Activated naive CD4-positive, alpha-beta T cell treated with anti-CD3 and anti-CD28 coated beads, Interleukin-2, amount 10 ng/mL, durations not matched to agents 7 days and 5 days (primary cell): ENCODE measurements at regions of chr19 and their contacts with region 1.

Region 1: GRCh38 chr19:35013031-35013819 is 13.1 kb downstream of the GRAMD1A start:
- DNase-seq: peak; percentile 84
- H3K4me3 Mint-ChIP-seq: peak overlapping the region; percentile 25
- H3K27ac Mint-ChIP-seq: peak overlapping the region; percentile 92
- H3K4me1 Mint-ChIP-seq: peaks cover 65% of the 10 kb centered on the region
- H3K27me3 Mint-ChIP-seq: no peaks in the 10 kb centered on the region

Region 2: DNA sequence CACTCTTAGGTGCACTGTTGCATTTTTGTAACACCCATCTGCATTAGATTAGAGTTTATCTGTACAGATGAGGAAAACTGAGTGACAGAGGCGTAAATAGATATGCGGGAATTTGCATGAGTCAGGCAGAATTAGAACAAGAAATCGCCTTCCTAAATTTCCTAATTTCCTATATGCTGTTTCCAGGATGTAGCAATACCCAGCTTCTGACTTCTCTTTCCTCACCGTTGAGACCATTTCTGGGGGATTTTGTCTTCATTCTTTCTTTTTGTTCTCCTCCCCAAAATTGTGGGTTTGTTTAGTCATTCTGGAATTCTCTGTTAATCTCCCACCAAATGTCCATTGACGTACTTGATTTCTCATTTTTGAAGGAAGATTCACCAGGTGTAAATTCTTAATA is 38.6 kb before region 1 on chr19:
- CTCF ChIA-PET with region 1: interaction called, 65 read pairs
- DNase-seq: no peak
- H3K4me3 Mint-ChIP-seq: no peak overlapping the region
- H3K27ac Mint-ChIP-seq: no peak overlapping the region
- H3K4me1 Mint-ChIP-seq: peaks cover 21% of the 10 kb centered on the region
- H3K27me3 Mint-ChIP-seq: peaks cover 32% of the 10 kb centered on the region

Region 3: GRCh38 chr19:34999498-35000341 is 13.5 kb before region 1 on chr19 and contains the start of gene GRAMD1A:
- CTCF ChIA-PET with region 1: interaction called, 15 read pairs
- DNase-seq: peak; percentile 83
- H3K4me3 Mint-ChIP-seq: peak within 1 kb of the TSS; percentile 94
- H3K27ac Mint-ChIP-seq: peak within 1 kb of the TSS; percentile 95
- H3K4me1 Mint-ChIP-seq: peaks cover 77% of the 10 kb centered on the region
- H3K27me3 Mint-ChIP-seq: no peaks in the 10 kb centered on the region